Breast epithelium (tissue), 4 donors: ENCODE measurements at regions of chr11 and their contacts with region 1.

Region 1: GRCh38 chr11:15976433-15977045 is 379.8 kb downstream of the SOX6 start:
- DNase-seq: no peak
- H3K4me3 ChIP-seq: no peak overlapping the region
- H3K27ac ChIP-seq: peak overlapping the region in 1 of 2 donors; percentile 54
- H3K4me1 ChIP-seq: no peaks in the 10 kb centered on the region
- H3K27me3 ChIP-seq: no peaks in the 10 kb centered on the region
- CTCF ChIP-seq: no peak
- POLR2A ChIP-seq: no peak

Region 2: DNA sequence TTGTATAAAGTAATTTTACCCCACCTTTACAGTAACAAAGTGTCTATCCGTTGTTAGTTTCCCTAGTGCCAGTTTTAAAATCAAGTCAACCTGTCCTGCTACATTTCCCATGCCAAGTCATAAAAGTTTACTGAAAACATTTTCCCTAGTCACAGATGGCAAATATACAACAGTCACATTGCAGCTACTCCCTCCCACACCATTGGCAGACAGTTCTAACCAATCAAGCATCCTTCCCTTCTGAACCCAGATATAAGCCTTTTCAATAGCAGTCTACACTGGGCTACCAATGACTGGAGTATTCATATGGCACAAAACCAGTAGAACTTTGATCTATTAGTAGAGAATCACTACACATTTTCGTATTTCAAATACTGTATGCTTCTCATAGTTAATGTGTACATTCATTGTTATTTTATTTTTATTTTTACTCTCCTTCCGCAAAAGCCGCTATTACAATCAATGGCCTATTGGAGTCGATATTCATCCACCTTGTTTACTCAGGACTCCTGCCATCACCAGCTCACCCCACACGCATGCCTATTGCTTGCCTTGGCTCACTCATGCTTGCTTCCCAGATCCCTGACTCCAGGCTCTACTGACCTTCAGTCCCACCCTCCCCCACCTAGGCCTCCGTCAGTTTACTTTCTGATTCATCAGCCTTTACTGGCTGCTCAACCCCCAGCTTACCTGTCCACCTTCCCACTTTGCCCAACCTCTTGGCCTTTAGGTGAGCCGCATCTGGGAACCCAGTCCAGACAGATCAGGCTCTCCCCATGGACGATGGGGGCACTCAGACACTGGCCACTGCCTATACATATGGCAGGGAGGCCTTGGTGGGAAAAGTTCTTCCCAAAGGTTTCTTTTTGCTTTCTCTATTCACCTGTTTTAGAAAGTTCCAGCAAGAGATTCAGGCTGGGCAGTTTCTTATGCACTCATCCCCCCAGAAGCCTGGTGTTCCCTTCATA is 28.6 kb before region 1 on chr11:
- intact Hi-C with region 1: loop called (anchors 1 kb)
- DNase-seq: no peak
- H3K4me3 ChIP-seq: no peak overlapping the region
- H3K27ac ChIP-seq: no peak overlapping the region
- H3K4me1 ChIP-seq: no peaks in the 10 kb centered on the region
- H3K27me3 ChIP-seq: no peaks in the 10 kb centered on the region
- CTCF ChIP-seq: no peak
- POLR2A ChIP-seq: no peak

Region 3: DNA sequence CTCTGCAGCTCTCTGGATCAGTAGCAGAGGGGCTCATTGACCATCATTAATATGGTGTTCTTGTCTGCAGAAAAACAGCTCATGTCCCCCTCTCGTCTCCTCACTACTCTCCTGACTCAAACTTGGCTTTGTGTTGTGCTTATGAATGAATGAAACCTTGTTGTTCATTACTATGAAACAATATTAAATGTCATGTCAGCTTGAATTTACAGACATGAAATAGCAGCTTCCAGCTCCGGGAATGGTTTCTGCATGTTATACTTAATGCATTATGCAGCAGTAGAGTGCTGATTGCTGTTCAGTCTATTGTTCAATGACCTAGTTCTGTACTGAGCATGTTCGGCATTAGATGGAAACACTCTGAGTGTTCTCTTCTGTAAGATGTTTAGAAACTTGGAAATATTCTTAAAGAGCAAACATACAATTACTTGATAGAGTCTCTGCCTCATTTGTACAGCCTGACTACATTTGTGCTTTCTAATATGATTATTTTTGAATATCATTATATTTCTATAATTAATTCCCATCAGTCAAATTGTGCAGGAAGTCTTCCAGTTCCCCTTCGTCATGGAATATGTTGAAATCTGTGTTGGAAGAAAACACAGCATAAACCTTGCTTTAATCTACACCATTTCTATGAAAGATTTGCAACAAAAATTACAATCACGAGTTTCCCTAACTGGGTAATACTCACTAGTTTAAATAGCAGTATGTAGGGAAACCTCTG is 39.4 kb after region 1 on chr11:
- intact Hi-C with region 1: no loop called
- DNase-seq: no peak
- H3K4me3 ChIP-seq: no peak overlapping the region
- H3K27ac ChIP-seq: no peak overlapping the region
- H3K4me1 ChIP-seq: no peaks in the 10 kb centered on the region
- H3K27me3 ChIP-seq: no peaks in the 10 kb centered on the region
- CTCF ChIP-seq: no peak
- POLR2A ChIP-seq: no peak